Motor neuron (in vitro differentiated cells): ENCODE measurements at regions of chr2 and their contacts with region 1.

Region 1: GRCh38 chr2:2698182-2699120 is 367.4 kb upstream of the MYT1L start:
- ATAC-seq: peak in 6 of 8 experiments; percentile 23 to 76 (median 70)
- H3K4me3 ChIP-seq: no peak overlapping the region
- H3K27ac ChIP-seq: peak overlapping the region; percentile 52 to 74
- H3K4me1 ChIP-seq: peaks cover 41 to 46% of the 10 kb centered on the region in 2 donors

Region 2: DNA sequence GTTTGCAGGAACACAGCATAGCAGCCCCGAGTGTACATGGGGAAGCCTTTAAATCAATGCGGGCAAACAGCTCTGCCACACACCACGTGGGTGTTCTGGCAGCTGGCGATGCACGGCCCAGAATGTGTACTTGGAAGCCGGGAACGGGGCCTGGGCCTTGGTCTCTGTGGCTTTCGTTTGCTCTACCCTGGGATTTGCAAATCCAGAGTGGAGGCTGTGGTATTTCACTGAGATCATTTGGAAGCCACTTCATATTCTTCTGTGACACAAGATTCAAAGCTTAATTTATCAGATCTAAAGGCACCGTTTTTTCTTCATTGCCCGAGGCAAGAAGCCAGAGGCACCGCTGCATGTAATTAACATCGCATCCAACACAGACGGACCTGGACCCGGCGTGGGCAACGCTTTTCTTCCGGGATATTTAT is 121.0 kb before region 1 on chr2:
- in situ Hi-C with region 1: loop called in 1 of 9 experiments (anchors 25 kb)
- ATAC-seq: peak in 6 of 8 experiments; percentile 56 to 92 (median 73)
- H3K4me3 ChIP-seq: no peak overlapping the region
- H3K27ac ChIP-seq: peak overlapping the region in 1 of 2 donors; percentile 34
- H3K4me1 ChIP-seq: peaks cover 25 to 50% of the 10 kb centered on the region in 2 donors